ENCODE measurements at regions of chrX and their contacts with region 1.

Region 1: DNA sequence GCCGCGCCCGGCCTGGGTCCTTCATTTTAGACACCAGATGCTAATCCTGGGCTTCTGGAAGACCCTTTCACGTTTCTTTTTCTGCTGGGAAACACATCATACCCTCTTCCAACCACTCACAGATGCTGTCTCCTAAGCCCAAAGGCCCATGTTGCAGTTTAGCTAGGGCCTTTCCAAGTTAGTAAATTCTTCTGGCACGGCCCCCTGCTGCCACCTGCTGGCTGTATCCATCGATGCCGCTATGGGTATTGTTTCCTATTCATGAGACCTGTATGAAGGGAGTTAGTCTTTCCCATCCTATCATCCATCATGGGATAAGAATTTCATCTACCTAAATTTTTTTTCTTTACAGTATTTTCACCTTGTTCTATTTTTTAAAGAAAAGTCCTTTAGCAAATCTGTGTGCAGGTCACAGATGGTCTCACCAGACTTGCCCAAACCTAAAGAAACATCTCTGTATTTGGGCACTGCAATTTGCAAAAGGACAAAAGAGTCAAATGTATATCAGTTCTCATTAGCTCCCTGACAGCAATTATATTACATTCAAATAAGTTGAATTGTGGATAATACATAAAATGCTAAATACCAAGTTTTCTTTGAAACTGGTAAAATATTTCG is 37.8 kb upstream of the SLC9A7 start:
- DNase-seq: peak; percentile 49 to 78
- ATAC-seq: peak; percentile 84 to 89
- H3K4me3 ChIP-seq: no peak overlapping the region
- H3K27ac ChIP-seq: peak overlapping the region in 1 of 2 experiments; percentile 46; a peak in 1 of 6 replicates
- H3K4me1 ChIP-seq: peaks cover 21% of the 10 kb centered on the region
- CTCF ChIP-seq: peak; percentile 78
- EP300 ChIP-seq: no peak
- POLR2A ChIP-seq: no peak
- RAD21 ChIP-seq: peak; percentile 95

Region 2: GRCh38 chrX:46561824-46562657 is 234.6 kb before region 1 on chrX:
- CTCF ChIA-PET with region 1: interaction called, 13 read pairs
- POLR2A ChIA-PET with region 1: no interaction called
- DNase-seq: no peak
- ATAC-seq: no peak
- H3K4me3 ChIP-seq: no peak overlapping the region
- H3K27ac ChIP-seq: peak overlapping the region; percentile 20 to 38; a peak in 2 of 6 replicates
- H3K4me1 ChIP-seq: peaks cover 15% of the 10 kb centered on the region
- CTCF ChIP-seq: no peak
- EP300 ChIP-seq: no peak
- POLR2A ChIP-seq: no peak
- RAD21 ChIP-seq: no peak

Region 3: GRCh38 chrX:46686003-46686645 is 110.6 kb before region 1 on chrX:
- CTCF ChIA-PET with region 1: interaction called, 10 read pairs
- POLR2A ChIA-PET with region 1: no interaction called
- DNase-seq: peak in 1 of 2 experiments; percentile 35
- ATAC-seq: peak; percentile 84 to 88; a peak in 5 of 6 replicates
- H3K4me3 ChIP-seq: no peak overlapping the region
- H3K27ac ChIP-seq: no peak overlapping the region
- H3K4me1 ChIP-seq: no peaks in the 10 kb centered on the region
- CTCF ChIP-seq: peak; percentile 63
- EP300 ChIP-seq: no peak
- POLR2A ChIP-seq: no peak
- RAD21 ChIP-seq: peak; percentile 53 to 68

Region 4: GRCh38 chrX:46758906-46759644 is 37.6 kb before region 1 on chrX and contains the start of gene SLC9A7:
- CTCF ChIA-PET with region 1: interaction called, 183 read pairs
- POLR2A ChIA-PET with region 1: interaction called, 7 read pairs
- DNase-seq: peak; percentile 55 to 84
- ATAC-seq: peak; percentile 89 to 92
- H3K4me3 ChIP-seq: peak within 1 kb of the TSS; percentile 89
- H3K27ac ChIP-seq: peak within 1 kb of the TSS; percentile 87 to 93
- H3K4me1 ChIP-seq: peaks cover 23% of the 10 kb centered on the region
- CTCF ChIP-seq: peak; percentile 86
- EP300 ChIP-seq: no peak
- POLR2A ChIP-seq: peak; percentile 42; the same call in 1 of the 2 replicates
- RAD21 ChIP-seq: peak; percentile 91 to 98
- polyA plus RNA-seq, gene SLC9A7: 21.1 and 22.3 TPM in 2 replicates

Region 5: GRCh38 chrX:46770817-46771163 is 25.9 kb before region 1 on chrX:
- CTCF ChIA-PET with region 1: interaction called, 29 read pairs
- POLR2A ChIA-PET with region 1: interaction called, 28 read pairs
- DNase-seq: peak in 1 of 2 experiments; percentile 58
- ATAC-seq: peak; percentile 92 to 96
- H3K4me3 ChIP-seq: no peak overlapping the region
- H3K27ac ChIP-seq: peak overlapping the region; percentile 64 to 84; a peak in 5 of 6 replicates
- H3K4me1 ChIP-seq: peaks cover 31% of the 10 kb centered on the region
- CTCF ChIP-seq: no peak
- EP300 ChIP-seq: no peak
- POLR2A ChIP-seq: no peak
- RAD21 ChIP-seq: no peak

Region 6: GRCh38 chrX:46777971-46778810 is 18.5 kb before region 1 on chrX:
- CTCF ChIA-PET with region 1: interaction called, 35 read pairs
- POLR2A ChIA-PET with region 1: no interaction called
- DNase-seq: no peak
- ATAC-seq: peak in 1 of 2 experiments; percentile 42; a peak in 1 of 6 replicates
- H3K4me3 ChIP-seq: no peak overlapping the region
- H3K27ac ChIP-seq: peak overlapping the region; percentile 78 to 84
- H3K4me1 ChIP-seq: peaks cover 16% of the 10 kb centered on the region
- CTCF ChIP-seq: no peak
- EP300 ChIP-seq: no peak
- POLR2A ChIP-seq: no peak
- RAD21 ChIP-seq: no peak

Region 7: DNA sequence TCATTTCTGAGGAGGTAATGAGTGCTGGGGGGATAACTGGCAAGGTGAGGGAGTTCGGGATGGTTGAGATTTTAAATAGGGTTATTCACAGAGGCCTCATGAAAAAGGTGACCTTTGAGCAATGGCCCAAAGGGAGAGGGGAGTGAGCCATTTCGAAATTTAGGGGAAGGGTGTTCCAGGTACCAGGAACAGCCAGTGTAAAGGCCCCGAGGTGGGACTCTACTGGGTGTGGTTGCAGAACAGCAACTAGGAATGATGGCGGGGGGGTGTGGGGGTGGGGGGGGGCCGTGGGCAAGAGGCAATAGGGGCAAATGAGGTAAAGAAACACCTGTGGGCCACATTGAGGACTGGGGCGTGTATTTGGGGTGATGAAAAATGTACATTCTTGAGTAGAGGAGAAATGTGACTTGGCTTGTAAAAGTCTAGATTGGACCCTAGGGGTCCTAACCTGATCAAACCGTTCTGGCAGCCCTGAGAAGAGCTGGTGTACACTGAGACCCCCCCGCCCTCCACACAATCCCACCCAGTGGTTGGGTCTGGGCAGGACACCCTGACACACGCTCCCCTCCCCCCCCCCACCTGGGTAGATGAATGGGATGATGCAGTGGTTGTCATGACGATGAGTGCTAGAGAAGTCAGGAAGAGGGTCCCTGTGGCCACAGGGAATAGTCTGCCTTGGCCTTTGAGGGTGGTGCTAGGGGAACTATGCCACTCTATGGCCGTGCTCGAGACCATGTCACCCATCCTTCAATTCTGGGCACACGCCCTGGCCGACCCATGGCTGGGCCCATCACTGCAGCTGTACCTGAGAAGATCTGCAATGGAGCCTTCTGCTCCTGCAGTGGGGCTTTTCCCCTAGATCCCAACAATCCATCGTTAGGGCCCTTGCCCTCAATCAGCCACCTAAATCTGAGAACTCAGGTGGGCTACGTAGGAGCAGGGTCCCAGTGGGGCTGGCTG is 426.0 kb after region 1 on chrX:
- CTCF ChIA-PET with region 1: no interaction called
- POLR2A ChIA-PET with region 1: no interaction called
- DNase-seq: no peak
- ATAC-seq: no peak
- H3K4me3 ChIP-seq: no peak overlapping the region
- H3K27ac ChIP-seq: no peak overlapping the region
- H3K4me1 ChIP-seq: peaks cover 16% of the 10 kb centered on the region; the same call in 1 of the 3 replicates
- CTCF ChIP-seq: no peak
- EP300 ChIP-seq: no peak
- POLR2A ChIP-seq: no peak
- RAD21 ChIP-seq: no peak